Endothelial cell of umbilical vein (primary cell): ENCODE measurements at regions of chr3 and their contacts with region 1.

Region 1: GRCh38 chr3:195182470-195182795 is 88.5 kb downstream of the XXYLT1 start:
- DNase-seq: peak; percentile 96
- H3K4me3 ChIP-seq: no peak overlapping the region
- H3K27ac ChIP-seq: peak overlapping the region; percentile 93
- H3K4me1 ChIP-seq: peaks cover 65% of the 10 kb centered on the region
- H3K27me3 ChIP-seq: no peaks in the 10 kb centered on the region
- CTCF ChIP-seq: no peak
- POLR2A ChIP-seq: no peak

Region 2: DNA sequence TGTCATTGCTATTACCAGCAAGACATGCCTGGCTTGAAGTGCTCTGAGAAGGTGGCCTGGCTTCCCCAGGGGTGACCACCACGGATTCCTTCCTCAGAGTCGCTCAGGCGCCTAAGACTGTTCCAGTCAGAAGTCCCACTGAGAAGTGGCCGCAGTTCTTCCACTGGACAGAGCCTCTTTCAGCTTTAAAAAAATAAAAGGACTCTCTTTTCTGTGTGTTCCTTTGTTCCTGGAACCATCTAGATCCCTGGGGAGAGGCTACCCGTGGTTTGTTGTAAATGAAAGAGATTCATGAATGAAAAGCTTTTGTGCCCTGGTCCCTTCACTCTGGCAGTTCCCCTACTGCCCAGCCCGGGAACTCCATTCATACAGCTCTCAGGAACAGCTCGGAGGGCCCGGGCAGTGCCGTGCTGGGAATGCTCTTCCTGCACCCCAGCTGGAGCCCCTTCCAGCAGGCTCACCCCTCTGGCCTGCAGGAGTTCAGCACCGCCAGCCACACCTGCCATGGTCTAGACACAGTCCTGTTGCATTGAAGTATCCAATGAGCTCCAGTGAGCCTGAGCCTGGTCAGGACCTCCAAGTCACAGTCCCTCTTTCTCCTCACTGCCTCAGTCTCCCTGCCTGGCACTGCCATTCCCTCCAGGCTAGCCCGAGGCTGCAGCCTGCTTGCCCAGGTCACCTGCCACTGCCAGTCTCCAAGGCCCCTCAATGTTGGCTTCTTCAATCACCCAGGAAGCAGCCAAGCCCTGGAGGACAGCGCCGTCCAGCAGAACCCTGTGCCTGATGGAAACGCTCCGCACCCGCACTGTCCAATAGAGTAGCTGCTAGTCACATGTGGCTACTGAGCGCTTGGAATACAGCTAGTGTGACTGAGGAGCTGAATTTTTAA is 13.1 kb after region 1 on chr3:
- CTCF ChIA-PET with region 1: interaction called, 14 read pairs
- POLR2A ChIA-PET with region 1: no interaction called
- dilution Hi-C with region 1: no loop called
- intact Hi-C with region 1: no loop called
- DNase-seq: peak; percentile 57
- H3K4me3 ChIP-seq: no peak overlapping the region
- H3K27ac ChIP-seq: peak overlapping the region; percentile 79
- H3K4me1 ChIP-seq: peaks cover 45% of the 10 kb centered on the region
- H3K27me3 ChIP-seq: no peaks in the 10 kb centered on the region
- CTCF ChIP-seq: peak in 1 of 2 donors; percentile 30
- POLR2A ChIP-seq: no peak

Region 3: DNA sequence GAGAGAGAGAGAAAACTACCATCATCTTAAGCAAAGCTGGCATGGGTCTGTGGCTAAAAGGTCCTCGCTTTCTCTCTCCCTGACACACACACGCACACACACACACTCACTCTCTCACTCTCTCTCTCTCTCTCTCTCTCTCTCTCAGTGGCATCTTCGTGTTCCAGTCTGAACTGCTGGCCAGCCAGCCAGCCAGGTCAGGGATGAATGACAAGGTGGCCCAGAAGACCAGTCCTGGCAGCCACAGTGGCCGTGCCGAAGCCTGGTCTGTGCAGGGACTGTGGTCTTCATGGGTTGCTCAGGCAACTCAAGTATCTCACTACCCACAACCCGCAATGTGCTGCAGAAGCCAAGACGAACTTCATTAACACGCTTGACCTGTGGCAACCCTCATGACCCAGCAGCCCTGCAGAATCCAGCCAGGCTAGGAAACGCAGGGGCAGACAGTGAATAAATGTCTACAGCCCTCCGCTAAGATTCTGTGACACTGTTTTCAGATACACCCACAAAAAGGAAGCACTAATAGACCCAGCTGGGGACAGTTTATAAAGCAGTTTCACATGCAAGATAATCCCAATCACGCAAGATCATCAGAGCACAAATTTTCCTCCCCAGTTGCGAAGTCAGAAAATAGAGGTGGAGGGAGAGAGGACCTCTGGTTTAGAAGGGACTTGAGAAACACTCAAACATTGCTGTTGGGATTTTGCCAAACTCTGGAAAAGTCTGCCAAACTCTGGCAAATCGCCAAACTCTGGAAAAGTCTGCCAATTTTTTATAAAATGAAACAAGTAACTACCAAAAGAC is 22.1 kb after region 1 on chr3:
- CTCF ChIA-PET with region 1: interaction called, 5 read pairs
- POLR2A ChIA-PET with region 1: no interaction called
- dilution Hi-C with region 1: no loop called
- intact Hi-C with region 1: loop called (anchors 1 kb)
- DNase-seq: peak; percentile 90
- H3K4me3 ChIP-seq: peak overlapping the region in 1 of 3 experiments; percentile 4
- H3K27ac ChIP-seq: peak overlapping the region; percentile 67
- H3K4me1 ChIP-seq: peaks cover 26% of the 10 kb centered on the region
- H3K27me3 ChIP-seq: no peaks in the 10 kb centered on the region
- CTCF ChIP-seq: no peak
- POLR2A ChIP-seq: no peak

Region 4: DNA sequence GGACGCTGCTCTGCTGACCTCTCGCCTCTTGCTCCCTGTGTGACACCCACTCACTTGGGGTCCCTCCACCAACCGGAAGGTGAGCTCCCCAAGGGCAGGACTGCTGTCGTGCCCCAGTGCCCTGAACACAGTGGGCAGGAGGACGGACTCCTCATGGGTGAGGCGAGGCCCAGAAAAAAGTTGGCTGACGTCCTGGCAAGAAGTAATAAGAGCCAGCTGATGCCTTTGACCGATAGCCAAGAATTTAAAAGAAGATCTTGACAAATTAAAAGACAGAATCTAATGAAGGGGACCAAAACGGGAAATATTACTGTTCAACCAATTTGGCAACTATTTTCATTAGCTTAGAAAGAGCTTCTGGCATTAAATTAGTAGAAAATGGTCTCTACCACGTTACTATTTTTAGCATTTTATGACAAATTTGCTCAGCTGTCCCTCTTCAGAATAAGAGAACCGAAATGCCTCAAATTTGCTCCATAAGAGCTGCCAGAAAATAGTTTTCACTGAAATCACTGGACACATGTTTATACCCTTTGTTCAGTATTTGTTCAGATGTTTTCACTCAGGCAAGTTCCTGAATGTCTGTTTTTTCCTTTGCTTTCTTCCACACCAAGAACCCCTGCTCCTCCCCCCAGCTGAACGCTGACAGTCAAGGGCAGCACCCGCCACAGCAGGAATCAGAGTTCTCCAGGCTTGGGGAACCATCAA is 28.0 kb after region 1 on chr3:
- CTCF ChIA-PET with region 1: interaction called, 8 read pairs
- POLR2A ChIA-PET with region 1: no interaction called
- dilution Hi-C with region 1: no loop called
- intact Hi-C with region 1: loop called (anchors 1 kb)
- DNase-seq: peak; percentile 89
- H3K4me3 ChIP-seq: no peak overlapping the region
- H3K27ac ChIP-seq: peak overlapping the region; percentile 58
- H3K4me1 ChIP-seq: peaks cover 28% of the 10 kb centered on the region
- H3K27me3 ChIP-seq: no peaks in the 10 kb centered on the region
- CTCF ChIP-seq: no peak
- POLR2A ChIP-seq: no peak

Region 5: DNA sequence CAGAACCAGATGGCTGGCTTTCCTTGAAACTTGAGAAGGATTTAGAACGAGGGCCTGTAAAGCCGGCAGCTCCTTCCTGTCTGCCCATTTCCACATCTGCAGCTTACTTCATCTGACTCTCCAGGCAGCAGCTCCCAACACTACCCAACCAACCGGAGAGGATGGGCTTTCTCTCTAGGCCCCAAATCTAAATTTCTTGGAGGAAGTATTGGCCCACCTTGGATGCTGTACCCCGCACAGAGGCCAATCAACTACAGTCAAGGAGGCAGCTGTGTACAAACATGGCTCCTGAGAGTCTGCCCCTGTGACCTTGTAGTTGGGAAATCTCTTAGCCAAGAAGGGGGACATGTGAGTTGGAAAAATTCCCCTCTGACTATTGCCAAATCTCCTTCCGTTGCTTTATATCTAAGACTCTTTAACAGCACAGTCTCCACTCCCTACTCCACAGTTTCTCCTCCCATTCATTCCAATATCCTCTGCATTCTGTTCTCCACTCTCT is 268.3 kb after region 1 on chr3:
- CTCF ChIA-PET with region 1: no interaction called
- POLR2A ChIA-PET with region 1: no interaction called
- dilution Hi-C with region 1: no loop called
- intact Hi-C with region 1: no loop called
- DNase-seq: no peak
- H3K4me3 ChIP-seq: no peak overlapping the region
- H3K27ac ChIP-seq: no peak overlapping the region
- H3K4me1 ChIP-seq: no peaks in the 10 kb centered on the region
- H3K27me3 ChIP-seq: peaks cover 4 to 9% of the 10 kb centered on the region in 2 experiments
- CTCF ChIP-seq: no peak
- POLR2A ChIP-seq: no peak

Region 6: GRCh38 chr3:196096382-196096953 is 914.0 kb after region 1 on chr3:
- CTCF ChIA-PET with region 1: no interaction called
- POLR2A ChIA-PET with region 1: no interaction called
- dilution Hi-C with region 1: no loop called
- intact Hi-C with region 1: no loop called
- DNase-seq: no peak
- H3K4me3 ChIP-seq: no peak overlapping the region
- H3K27ac ChIP-seq: no peak overlapping the region
- H3K4me1 ChIP-seq: no peaks in the 10 kb centered on the region
- H3K27me3 ChIP-seq: no peaks in the 10 kb centered on the region
- CTCF ChIP-seq: no peak
- POLR2A ChIP-seq: no peak